Activated CD8-positive, alpha-beta T cell treated with anti-CD3 and anti-CD28 coated beads, Interleukin-2, amount 10 ng/mL, durations not matched to agents 7 days and 5 days (primary cell): ENCODE measurements at regions of chr10 and their contacts with region 1.

Region 1: DNA sequence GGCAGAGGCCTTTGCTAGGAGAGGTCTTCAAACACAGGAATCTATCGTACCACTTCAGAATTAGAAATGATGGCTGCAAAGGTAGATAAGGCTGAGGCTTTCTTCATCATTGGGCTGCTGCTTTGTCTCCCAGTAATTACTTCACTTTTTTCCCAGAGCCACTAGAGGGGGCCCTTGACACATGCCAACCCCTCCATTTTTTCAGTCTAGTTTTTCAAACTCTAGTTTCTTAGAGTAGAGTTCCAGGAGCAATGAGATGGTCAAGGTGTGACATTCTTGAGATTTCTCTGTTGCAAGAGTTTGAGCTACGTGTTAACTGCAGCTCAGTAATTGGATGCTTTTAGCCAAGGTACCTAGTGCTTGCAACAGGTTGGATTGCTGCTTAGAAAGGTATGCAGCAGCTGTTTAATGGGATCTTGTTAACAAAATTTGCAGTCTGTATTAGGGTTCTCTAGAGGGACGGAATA is 33.8 kb upstream of the RBM20 start:
- DNase-seq: peak; percentile 71
- ATAC-seq: peak; percentile 60
- H3K4me3 Mint-ChIP-seq: no peak overlapping the region
- H3K27ac Mint-ChIP-seq: no peak overlapping the region
- H3K4me1 Mint-ChIP-seq: peaks cover 39% of the 10 kb centered on the region
- H3K27me3 Mint-ChIP-seq: no peaks in the 10 kb centered on the region

Region 2: GRCh38 chr10:110643653-110644597 is 33.6 kb after region 1 on chr10 and contains the start of gene RBM20:
- CTCF ChIA-PET with region 1: interaction called, 10 read pairs
- POLR2A ChIA-PET with region 1: no interaction called
- DNase-seq: peak; percentile 32
- ATAC-seq: peak; percentile 73
- H3K4me3 Mint-ChIP-seq: peak within 1 kb of the TSS; percentile 66
- H3K27ac Mint-ChIP-seq: no peak within 1 kb of the TSS
- H3K4me1 Mint-ChIP-seq: peaks cover 33% of the 10 kb centered on the region
- H3K27me3 Mint-ChIP-seq: peaks cover 56% of the 10 kb centered on the region
- total RNA-seq, gene RBM20: 0.03 TPM in 1 of 2 experiments, not detected in the other

Region 3: GRCh38 chr10:110681023-110681681 is 70.8 kb after region 1 on chr10:
- CTCF ChIA-PET with region 1: interaction called, 27 read pairs
- POLR2A ChIA-PET with region 1: no interaction called
- DNase-seq: peak; percentile 57
- ATAC-seq: peak; percentile 72
- H3K4me3 Mint-ChIP-seq: no peak overlapping the region
- H3K27ac Mint-ChIP-seq: no peak overlapping the region
- H3K4me1 Mint-ChIP-seq: peaks cover 3% of the 10 kb centered on the region
- H3K27me3 Mint-ChIP-seq: peaks cover 35% of the 10 kb centered on the region